MCF 10A (cell line): ENCODE measurements at regions of chr11 and their contacts with region 1.

Region 1: GRCh38 chr11:9460322-9461067 is at the start of gene ZNF143:
- DNase-seq: peak; percentile 100
- H3K4me3 Mint-ChIP-seq: peak within 1 kb of the TSS; percentile 88
- H3K27ac Mint-ChIP-seq: peak within 1 kb of the TSS; percentile 98
- H3K4me1 Mint-ChIP-seq: peaks cover 10% of the 10 kb centered on the region
- H3K27me3 Mint-ChIP-seq: no peaks in the 10 kb centered on the region
- CTCF ChIP-seq: no peak
- total RNA-seq, gene ZNF143: 19.0 and 25.2 TPM in 2 replicates

Region 2: DNA sequence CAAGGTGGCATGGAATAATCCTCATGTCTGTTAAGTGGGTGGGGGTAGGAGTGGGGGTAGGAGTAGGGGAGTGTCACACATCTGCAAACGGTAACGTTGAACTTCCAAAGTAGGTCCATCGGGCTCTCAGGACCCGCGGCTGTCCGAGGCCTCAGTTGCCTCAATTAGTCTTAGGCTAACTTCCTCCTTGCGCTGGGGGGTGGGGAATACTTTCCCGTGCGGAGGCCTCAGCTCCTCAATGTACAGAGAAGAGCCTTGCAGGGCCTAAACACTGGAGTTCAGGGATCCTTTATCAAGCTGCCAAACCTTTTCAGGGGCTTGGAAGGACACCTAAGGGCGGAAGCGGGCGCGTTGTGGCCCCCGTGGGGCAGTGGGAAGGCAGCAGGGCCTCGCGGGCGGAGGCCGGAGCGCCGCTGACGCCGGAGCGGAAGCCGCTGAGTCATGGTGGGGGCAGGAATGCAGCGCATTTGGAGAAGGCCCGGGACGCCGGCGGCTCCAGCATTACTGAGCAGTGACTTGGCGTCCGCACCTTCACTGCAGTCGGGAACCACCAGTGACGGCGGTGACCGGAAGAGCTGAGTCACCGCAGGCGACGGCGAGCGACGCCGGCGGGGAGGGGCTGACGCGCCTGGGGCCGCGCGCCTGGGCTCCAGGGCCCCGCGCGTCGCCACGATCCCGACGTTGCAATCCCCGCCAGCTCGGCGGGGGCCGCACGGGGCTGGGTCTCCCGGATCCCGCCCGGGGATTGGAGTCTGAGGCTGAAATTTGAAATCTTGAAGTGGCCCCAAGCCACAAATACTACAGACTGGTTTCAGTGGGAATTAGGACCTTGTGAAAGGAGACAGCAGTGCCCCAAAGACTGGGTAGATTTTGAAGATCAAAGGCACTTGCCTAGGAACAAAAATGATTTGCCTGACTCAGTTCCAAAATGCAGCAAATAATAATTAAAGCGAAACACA is 96.3 kb before region 1 on chr11:
- CTCF ChIA-PET with region 1: no interaction called
- POLR2A ChIA-PET with region 1: interaction called, 23 read pairs
- intact Hi-C with region 1: no loop called
- DNase-seq: peak; percentile 95
- H3K4me3 Mint-ChIP-seq: peak overlapping the region; percentile 74
- H3K27ac Mint-ChIP-seq: peak overlapping the region; percentile 98
- H3K4me1 Mint-ChIP-seq: peaks cover 12% of the 10 kb centered on the region
- H3K27me3 Mint-ChIP-seq: no peaks in the 10 kb centered on the region
- CTCF ChIP-seq: no peak

Region 3: GRCh38 chr11:9448576-9449352 is 11.7 kb before region 1 on chr11:
- CTCF ChIA-PET with region 1: interaction called, 3 read pairs
- POLR2A ChIA-PET with region 1: interaction called, 44 read pairs
- intact Hi-C with region 1: no loop called
- DNase-seq: no peak
- H3K4me3 Mint-ChIP-seq: no peak overlapping the region
- H3K27ac Mint-ChIP-seq: no peak overlapping the region
- H3K4me1 Mint-ChIP-seq: no peaks in the 10 kb centered on the region
- H3K27me3 Mint-ChIP-seq: no peaks in the 10 kb centered on the region
- CTCF ChIP-seq: no peak

Region 4: GRCh38 chr11:9498457-9499078 is 38.1 kb after region 1 on chr11:
- CTCF ChIA-PET with region 1: interaction called, 3 read pairs
- POLR2A ChIA-PET with region 1: interaction called, 11 read pairs
- intact Hi-C with region 1: no loop called
- DNase-seq: no peak
- H3K4me3 Mint-ChIP-seq: no peak overlapping the region
- H3K27ac Mint-ChIP-seq: no peak overlapping the region
- H3K4me1 Mint-ChIP-seq: no peaks in the 10 kb centered on the region
- H3K27me3 Mint-ChIP-seq: no peaks in the 10 kb centered on the region
- CTCF ChIP-seq: no peak

Region 5: GRCh38 chr11:9573052-9573774 is 112.7 kb after region 1 on chr11 and contains the start of gene WEE1:
- CTCF ChIA-PET with region 1: interaction called, 4 read pairs
- POLR2A ChIA-PET with region 1: interaction called, 190 read pairs
- intact Hi-C with region 1: loop called (anchors 1 kb)
- DNase-seq: peak; percentile 98
- H3K4me3 Mint-ChIP-seq: peak within 1 kb of the TSS; percentile 79
- H3K27ac Mint-ChIP-seq: peak within 1 kb of the TSS; percentile 99
- H3K4me1 Mint-ChIP-seq: peaks cover 20% of the 10 kb centered on the region
- H3K27me3 Mint-ChIP-seq: no peaks in the 10 kb centered on the region
- CTCF ChIP-seq: no peak
- total RNA-seq, gene WEE1: 28.7 and 34.5 TPM in 2 replicates